Panc1 (cell line): ENCODE measurements at regions of chr7 and their contacts with region 1.

Region 1: GRCh38 chr7:123367484-123368122 is 166.8 kb downstream of the IQUB start:
- DNase-seq: peak; percentile 20
- ATAC-seq: peak; percentile 72; the same call in 1 of the 2 replicates
- H3K4me3 ChIP-seq: no peak overlapping the region
- H3K27ac ChIP-seq: no peak overlapping the region
- H3K4me1 ChIP-seq: no peaks in the 10 kb centered on the region
- H3K27me3 ChIP-seq: no peaks in the 10 kb centered on the region
- CTCF ChIP-seq: peak; percentile 86

Region 2: GRCh38 chr7:123070702-123071286 is 296.8 kb before region 1 on chr7:
- CTCF ChIA-PET with region 1: interaction called, 3 read pairs
- POLR2A ChIA-PET with region 1: no interaction called
- in situ Hi-C with region 1: no loop called
- intact Hi-C with region 1: loop called (anchors 10 kb)
- DNase-seq: peak; percentile 18
- ATAC-seq: no peak
- H3K4me3 ChIP-seq: no peak overlapping the region
- H3K27ac ChIP-seq: no peak overlapping the region
- H3K4me1 ChIP-seq: no peaks in the 10 kb centered on the region
- H3K27me3 ChIP-seq: no peaks in the 10 kb centered on the region
- CTCF ChIP-seq: peak; percentile 60

Region 3: GRCh38 chr7:123440101-123440548 is 72.5 kb after region 1 on chr7:
- CTCF ChIA-PET with region 1: no interaction called
- POLR2A ChIA-PET with region 1: no interaction called
- in situ Hi-C with region 1: no loop called
- intact Hi-C with region 1: no loop called
- DNase-seq: no peak
- ATAC-seq: no peak
- H3K4me3 ChIP-seq: no peak overlapping the region
- H3K27ac ChIP-seq: no peak overlapping the region
- H3K4me1 ChIP-seq: no peaks in the 10 kb centered on the region
- H3K27me3 ChIP-seq: no peaks in the 10 kb centered on the region
- CTCF ChIP-seq: no peak

Region 4: DNA sequence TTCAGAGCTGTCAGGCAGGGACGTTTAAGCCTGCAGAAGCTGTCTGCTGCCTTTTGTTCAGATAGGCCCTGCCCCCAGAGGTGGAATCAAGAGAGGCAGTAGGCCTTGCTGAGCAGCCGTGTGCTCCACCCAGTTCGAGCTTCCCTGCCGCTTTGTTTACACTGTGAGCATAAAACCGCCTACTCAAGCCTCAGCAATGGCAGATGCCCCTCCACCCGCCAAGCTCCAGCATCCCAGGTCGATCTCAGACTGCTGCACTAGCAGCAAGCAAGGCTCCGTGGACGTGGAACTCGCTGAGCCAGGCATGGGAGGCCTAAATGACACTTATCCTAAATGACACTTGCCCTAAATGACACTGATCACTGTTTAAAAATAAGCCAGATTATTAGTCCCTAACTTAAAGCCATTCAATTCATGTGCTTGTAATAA is 227.2 kb after region 1 on chr7:
- CTCF ChIA-PET with region 1: no interaction called
- POLR2A ChIA-PET with region 1: no interaction called
- in situ Hi-C with region 1: no loop called
- intact Hi-C with region 1: no loop called
- DNase-seq: no peak
- ATAC-seq: no peak
- H3K4me3 ChIP-seq: no peak overlapping the region
- H3K27ac ChIP-seq: no peak overlapping the region
- H3K4me1 ChIP-seq: no peaks in the 10 kb centered on the region
- H3K27me3 ChIP-seq: no peaks in the 10 kb centered on the region
- CTCF ChIP-seq: no peak